Ovary (tissue), 10 donors: ENCODE measurements at regions of chr21 and their contacts with region 1.

Region 1: DNA sequence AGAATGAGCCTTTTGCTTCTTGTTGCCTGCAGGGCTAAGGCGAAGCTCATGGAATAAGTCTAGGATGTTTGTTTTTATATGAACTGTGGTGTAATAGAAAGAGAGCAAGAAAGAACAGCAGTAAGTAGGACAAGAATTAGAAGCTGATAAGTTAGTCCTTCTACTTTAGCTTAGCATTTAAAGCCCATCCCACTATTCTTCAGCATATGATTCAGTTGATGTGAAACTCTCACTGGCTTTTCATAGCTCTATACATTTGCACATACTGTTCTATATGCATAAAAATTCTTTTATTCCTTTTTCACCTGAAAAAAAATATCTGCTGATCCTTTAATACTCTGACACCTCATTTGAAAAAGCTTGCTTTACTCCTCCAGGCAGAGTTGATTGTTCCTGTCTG is 712.0 kb downstream of the USP25 start:
- DNase-seq: no peak
- H3K4me3 ChIP-seq: no peak overlapping the region
- H3K27ac ChIP-seq: no peak overlapping the region
- H3K4me1 ChIP-seq: peaks cover 4% of the 10 kb centered on the region
- H3K27me3 ChIP-seq: no peaks in the 10 kb centered on the region
- CTCF ChIP-seq: no peak
- EP300 ChIP-seq: no peak
- POLR2A ChIP-seq: no peak

Region 2: GRCh38 chr21:16624479-16625118 is 182.8 kb after region 1 on chr21:
- intact Hi-C with region 1: no loop called
- DNase-seq: no peak
- H3K4me3 ChIP-seq: no peak overlapping the region
- H3K27ac ChIP-seq: no peak overlapping the region
- H3K4me1 ChIP-seq: no peaks in the 10 kb centered on the region
- H3K27me3 ChIP-seq: no peaks in the 10 kb centered on the region
- CTCF ChIP-seq: no peak
- EP300 ChIP-seq: no peak
- POLR2A ChIP-seq: no peak

Region 3: GRCh38 chr21:16968436-16968835 is 526.6 kb after region 1 on chr21:
- intact Hi-C with region 1: loop called in 1 of 4 experiments (anchors 10 kb)
- DNase-seq: peak in 1 of 5 donors; percentile 28
- H3K4me3 ChIP-seq: no peak overlapping the region
- H3K27ac ChIP-seq: no peak overlapping the region
- H3K4me1 ChIP-seq: peaks cover 2% of the 10 kb centered on the region
- H3K27me3 ChIP-seq: no peaks in the 10 kb centered on the region
- CTCF ChIP-seq: no peak
- EP300 ChIP-seq: no peak
- POLR2A ChIP-seq: no peak